Activated T-helper 1 cell treated with anti-CD3 and anti-CD28 coated beads, Interleukin-12 subunit alpha, Interleukin-12 subunit beta, Interleukin-2, Interleukin-4 antibody, amounts not matched to agents 30 ng/mL and 10 ng/mL and 1 ng/mL, durations not matched to agents 14 hours and 24 hours and 36 hours (primary cell): ENCODE measurements at regions of chr10 and their contacts with region 1.

Region 1: GRCh38 chr10:1109795-1110673 is 53.8 kb downstream of the WDR37 start:
- DNase-seq: peak; percentile 71
- H3K4me3 Mint-ChIP-seq: peak overlapping the region; percentile 39
- H3K27ac Mint-ChIP-seq: peak overlapping the region; percentile 75
- H3K4me1 Mint-ChIP-seq: peaks cover 54% of the 10 kb centered on the region
- H3K27me3 Mint-ChIP-seq: no peaks in the 10 kb centered on the region

Region 2: GRCh38 chr10:931416-932318 is 178.4 kb before region 1 on chr10 and contains the start of gene LARP4B:
- intact Hi-C with region 1: loop called (anchors 1 kb)
- DNase-seq: peak; percentile 98
- H3K4me3 Mint-ChIP-seq: peak within 1 kb of the TSS; percentile 99
- H3K27ac Mint-ChIP-seq: peak within 1 kb of the TSS; percentile 96
- H3K4me1 Mint-ChIP-seq: peaks cover 31% of the 10 kb centered on the region
- H3K27me3 Mint-ChIP-seq: no peaks in the 10 kb centered on the region
- total RNA-seq, gene LARP4B: 172 and 174 TPM in 2 replicates

Region 3: DNA sequence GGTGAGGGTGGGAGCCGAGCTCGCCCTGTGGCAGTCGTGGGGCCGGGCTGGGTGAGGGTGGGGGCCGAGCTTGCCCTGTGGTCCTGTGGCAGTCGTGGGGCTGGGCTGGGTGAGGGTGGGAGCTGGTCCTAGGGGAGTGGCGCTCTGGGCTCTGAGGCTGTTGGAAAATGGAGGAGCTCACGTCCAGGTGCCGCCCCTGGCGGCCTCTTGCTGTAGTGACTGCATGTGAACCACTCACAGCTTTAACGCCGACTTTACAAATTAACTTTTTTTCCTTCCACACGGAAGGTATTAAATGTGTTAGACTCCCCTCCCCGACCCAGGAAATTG is 258.8 kb after region 1 on chr10:
- intact Hi-C with region 1: loop called (anchors 5 kb)
- DNase-seq: no peak
- H3K4me3 Mint-ChIP-seq: no peak overlapping the region
- H3K27ac Mint-ChIP-seq: no peak overlapping the region
- H3K4me1 Mint-ChIP-seq: no peaks in the 10 kb centered on the region
- H3K27me3 Mint-ChIP-seq: peaks cover 8% of the 10 kb centered on the region

Region 4: GRCh38 chr10:1643161-1643907 is 533.3 kb after region 1 on chr10:
- intact Hi-C with region 1: loop called (anchors 2 kb)
- DNase-seq: peak; percentile 34
- H3K4me3 Mint-ChIP-seq: peak overlapping the region; percentile 28
- H3K27ac Mint-ChIP-seq: peak overlapping the region; percentile 92
- H3K4me1 Mint-ChIP-seq: peaks cover 17% of the 10 kb centered on the region
- H3K27me3 Mint-ChIP-seq: peaks cover 6% of the 10 kb centered on the region

Region 5: DNA sequence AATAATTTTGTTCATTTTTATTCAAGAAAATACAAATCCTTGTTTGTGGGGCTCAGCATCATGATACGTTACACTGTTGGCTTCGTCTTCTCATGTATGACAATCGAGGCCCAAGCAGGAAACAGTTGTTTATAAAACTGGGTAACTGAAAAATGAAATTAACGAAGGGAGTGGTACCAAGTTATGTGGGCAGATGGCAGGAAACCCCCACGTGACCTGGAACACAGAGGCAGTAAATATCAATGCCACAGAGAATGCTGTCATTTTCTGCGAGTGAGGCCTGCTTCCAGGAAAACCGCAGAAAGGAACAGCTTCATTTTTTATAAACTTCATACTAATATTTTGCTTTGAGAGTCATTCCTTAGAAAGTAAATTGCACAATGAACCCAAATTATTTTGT is 828.3 kb after region 1 on chr10:
- intact Hi-C with region 1: loop called (anchors 10 kb)
- DNase-seq: peak; percentile 54
- H3K4me3 Mint-ChIP-seq: peak overlapping the region; percentile 68
- H3K27ac Mint-ChIP-seq: peak overlapping the region; percentile 90
- H3K4me1 Mint-ChIP-seq: peaks cover 30% of the 10 kb centered on the region
- H3K27me3 Mint-ChIP-seq: no peaks in the 10 kb centered on the region